Activated CD4-positive, alpha-beta memory T cell treated with anti-CD3 and anti-CD28 coated beads for 36 hours (primary cell): ENCODE measurements at regions of chr11 and their contacts with region 1.

Region 1: GRCh38 chr11:110376711-110377324 is 52.9 kb upstream of the FDX1 start:
- DNase-seq: peak; percentile 32
- H3K4me3 Mint-ChIP-seq: no peak overlapping the region
- H3K27ac Mint-ChIP-seq: no peak overlapping the region
- H3K4me1 Mint-ChIP-seq: peaks cover 17% of the 10 kb centered on the region
- H3K27me3 Mint-ChIP-seq: peaks cover 5% of the 10 kb centered on the region

Region 2: DNA sequence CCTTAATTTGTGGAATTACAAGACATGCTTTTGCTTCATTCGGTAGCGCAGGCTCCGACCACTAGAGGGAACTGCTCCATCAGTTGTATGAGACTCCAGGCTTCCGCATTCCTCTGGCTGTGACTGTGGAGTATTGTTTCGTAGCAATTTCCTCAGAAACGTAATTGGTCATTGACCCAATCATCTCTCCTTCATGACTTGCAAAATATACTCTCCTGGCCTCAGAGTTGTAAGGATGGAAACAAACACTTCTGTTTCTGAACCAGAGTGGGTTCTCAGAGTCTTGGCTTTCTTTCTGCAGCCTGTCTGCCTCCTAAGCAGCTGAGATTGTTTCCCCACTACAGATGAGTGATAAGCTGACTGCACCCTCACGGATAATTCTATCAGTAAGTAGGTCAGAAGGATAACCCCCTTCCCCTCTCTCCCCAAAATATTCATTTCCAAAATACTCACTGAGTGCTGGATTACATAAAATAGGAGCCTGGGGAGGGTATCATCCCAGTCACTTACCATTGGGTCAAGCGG is 430.4 kb before region 1 on chr11:
- CTCF ChIA-PET with region 1: no interaction called
- POLR2A ChIA-PET with region 1: no interaction called
- intact Hi-C with region 1: loop called (anchors 5 kb)
- DNase-seq: peak; percentile 70
- H3K4me3 Mint-ChIP-seq: no peak overlapping the region
- H3K27ac Mint-ChIP-seq: no peak overlapping the region
- H3K4me1 Mint-ChIP-seq: peaks cover 2% of the 10 kb centered on the region
- H3K27me3 Mint-ChIP-seq: no peaks in the 10 kb centered on the region

Region 3: GRCh38 chr11:110296226-110297075 is 80.4 kb before region 1 on chr11 and contains the start of gene RDX:
- CTCF ChIA-PET with region 1: interaction called, 4 read pairs
- POLR2A ChIA-PET with region 1: no interaction called
- intact Hi-C with region 1: loop called (anchors 1 kb)
- DNase-seq: peak; percentile 69
- H3K4me3 Mint-ChIP-seq: peak within 1 kb of the TSS; percentile 85
- H3K27ac Mint-ChIP-seq: peak within 1 kb of the TSS; percentile 78
- H3K4me1 Mint-ChIP-seq: peaks cover 41% of the 10 kb centered on the region
- H3K27me3 Mint-ChIP-seq: no peaks in the 10 kb centered on the region
- total RNA-seq, gene RDX: 47.9 to 56.2 TPM

Region 4: DNA sequence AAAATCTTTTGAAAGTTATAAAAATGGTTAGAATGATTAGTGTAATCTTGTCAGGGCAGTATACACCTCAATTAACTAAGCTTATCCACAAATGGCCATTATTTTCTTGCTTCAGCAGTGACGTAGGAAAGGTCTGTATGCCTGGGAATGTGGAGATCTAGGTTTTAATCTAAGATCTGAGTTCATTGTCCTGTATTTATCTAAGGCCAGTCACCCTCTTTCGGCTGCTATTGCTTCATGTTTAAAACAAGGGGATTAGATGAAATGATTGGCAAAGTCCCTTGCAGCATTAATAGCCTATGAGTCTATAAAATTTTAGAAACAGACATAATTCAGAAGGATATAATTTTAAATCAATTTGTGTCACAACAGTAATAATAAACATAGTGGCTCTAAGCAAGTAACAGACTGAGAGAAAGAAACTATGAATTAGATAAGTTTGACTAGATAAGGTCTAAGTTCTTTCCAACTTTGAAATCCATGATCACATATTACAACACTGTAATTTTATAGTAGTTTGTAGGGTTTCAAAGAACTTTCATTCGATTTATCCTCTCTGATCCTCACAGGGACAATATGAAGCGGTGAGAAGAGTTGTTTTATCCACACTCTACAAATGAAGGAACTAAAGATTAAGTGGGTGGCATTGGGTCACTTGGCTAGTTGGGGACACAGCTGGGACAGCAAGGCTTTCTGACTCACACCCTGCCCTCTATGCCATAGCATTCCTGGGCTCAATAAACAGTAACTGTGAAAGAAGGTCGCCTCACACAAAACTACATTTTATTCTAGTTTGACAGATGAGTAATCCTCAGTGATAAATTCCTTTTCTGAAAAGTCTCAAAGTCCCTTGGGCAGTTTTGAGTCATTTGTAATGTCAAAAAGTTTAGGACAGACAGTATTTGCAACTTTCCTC is 19.8 kb before region 1 on chr11:
- CTCF ChIA-PET with region 1: no interaction called
- POLR2A ChIA-PET with region 1: no interaction called
- intact Hi-C with region 1: loop called (anchors 1 kb)
- DNase-seq: no peak
- H3K4me3 Mint-ChIP-seq: no peak overlapping the region
- H3K27ac Mint-ChIP-seq: peak overlapping the region; percentile 53
- H3K4me1 Mint-ChIP-seq: peaks cover 18% of the 10 kb centered on the region
- H3K27me3 Mint-ChIP-seq: no peaks in the 10 kb centered on the region

Region 5: DNA sequence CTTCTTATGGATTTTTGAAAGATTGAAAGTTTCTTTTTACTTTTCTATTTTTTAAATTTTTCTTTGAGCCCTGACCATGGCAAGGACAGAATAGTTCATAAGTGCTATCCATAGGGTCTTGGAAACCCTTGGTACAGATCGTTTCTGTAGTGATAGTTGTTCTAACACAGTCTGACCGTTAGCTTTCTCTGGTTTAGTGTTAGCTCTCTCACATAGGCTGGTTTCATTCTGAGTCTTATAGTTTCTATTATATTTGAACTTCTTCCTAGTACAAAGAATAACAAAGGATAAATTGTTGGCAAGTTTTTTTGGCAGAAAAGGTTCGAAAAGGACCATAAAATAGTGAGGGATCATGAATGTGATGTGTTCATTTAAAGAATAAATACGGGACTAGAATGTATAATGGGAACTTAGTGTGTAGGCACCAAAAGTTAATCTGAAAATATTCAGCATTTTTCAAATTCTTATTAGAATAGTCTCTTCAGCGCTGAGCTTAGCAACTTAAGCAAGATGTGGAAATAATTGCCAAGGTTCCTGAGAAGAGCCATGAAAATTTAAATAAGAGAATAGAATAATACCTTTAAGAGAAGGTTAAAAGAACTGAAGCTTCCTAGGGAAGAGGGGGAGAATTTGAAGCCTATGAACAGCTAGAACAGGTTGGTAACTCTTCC is 77.0 kb after region 1 on chr11:
- CTCF ChIA-PET with region 1: no interaction called
- POLR2A ChIA-PET with region 1: no interaction called
- intact Hi-C with region 1: loop called (anchors 1 kb)
- DNase-seq: no peak
- H3K4me3 Mint-ChIP-seq: no peak overlapping the region
- H3K27ac Mint-ChIP-seq: no peak overlapping the region
- H3K4me1 Mint-ChIP-seq: peaks cover 34% of the 10 kb centered on the region
- H3K27me3 Mint-ChIP-seq: no peaks in the 10 kb centered on the region